ENCODE measurements at regions of chr18 and their contacts with region 1.

Region 1: GRCh38 chr18:23586249-23587196 is at the start of gene NPC1:
- DNase-seq: peak; percentile 95 to 98 (median 98)
- ATAC-seq: peak; percentile 98 to 99
- H3K4me3 ChIP-seq: peak within 1 kb of the TSS; percentile 84
- H3K27ac ChIP-seq: peak within 1 kb of the TSS; percentile 99
- H3K4me1 ChIP-seq: peaks cover 5% of the 10 kb centered on the region
- H3K27me3 ChIP-seq: no peaks in the 10 kb centered on the region
- total RNA-seq, gene NPC1: 13.4 to 22.1 (median 15.7) TPM

Region 2: DNA sequence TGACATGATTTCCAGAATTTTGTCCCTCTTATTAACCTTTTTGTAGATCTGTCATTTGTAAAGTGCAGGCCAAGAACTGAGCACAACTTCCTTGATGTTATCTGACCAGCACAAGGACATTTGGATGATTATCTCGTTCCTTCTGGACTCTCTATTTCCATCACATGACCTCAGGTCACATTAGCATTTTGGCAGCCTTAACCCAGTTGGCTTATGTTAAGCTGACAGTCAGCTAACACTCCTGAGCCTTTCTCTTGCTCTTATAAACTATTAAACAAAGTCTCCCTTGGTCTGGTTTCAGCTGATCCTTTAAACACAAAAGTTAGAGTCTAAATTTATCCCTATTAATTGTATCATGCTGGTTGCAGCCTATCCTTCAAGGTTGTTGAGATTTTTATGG is 820.6 kb before region 1 on chr18:
- intact Hi-C with region 1: no loop called
- DNase-seq: no peak
- ATAC-seq: peak; percentile 74 to 81
- H3K4me3 ChIP-seq: no peak overlapping the region
- H3K27ac ChIP-seq: no peak overlapping the region
- H3K4me1 ChIP-seq: no peaks in the 10 kb centered on the region
- H3K27me3 ChIP-seq: no peaks in the 10 kb centered on the region

Region 3: DNA sequence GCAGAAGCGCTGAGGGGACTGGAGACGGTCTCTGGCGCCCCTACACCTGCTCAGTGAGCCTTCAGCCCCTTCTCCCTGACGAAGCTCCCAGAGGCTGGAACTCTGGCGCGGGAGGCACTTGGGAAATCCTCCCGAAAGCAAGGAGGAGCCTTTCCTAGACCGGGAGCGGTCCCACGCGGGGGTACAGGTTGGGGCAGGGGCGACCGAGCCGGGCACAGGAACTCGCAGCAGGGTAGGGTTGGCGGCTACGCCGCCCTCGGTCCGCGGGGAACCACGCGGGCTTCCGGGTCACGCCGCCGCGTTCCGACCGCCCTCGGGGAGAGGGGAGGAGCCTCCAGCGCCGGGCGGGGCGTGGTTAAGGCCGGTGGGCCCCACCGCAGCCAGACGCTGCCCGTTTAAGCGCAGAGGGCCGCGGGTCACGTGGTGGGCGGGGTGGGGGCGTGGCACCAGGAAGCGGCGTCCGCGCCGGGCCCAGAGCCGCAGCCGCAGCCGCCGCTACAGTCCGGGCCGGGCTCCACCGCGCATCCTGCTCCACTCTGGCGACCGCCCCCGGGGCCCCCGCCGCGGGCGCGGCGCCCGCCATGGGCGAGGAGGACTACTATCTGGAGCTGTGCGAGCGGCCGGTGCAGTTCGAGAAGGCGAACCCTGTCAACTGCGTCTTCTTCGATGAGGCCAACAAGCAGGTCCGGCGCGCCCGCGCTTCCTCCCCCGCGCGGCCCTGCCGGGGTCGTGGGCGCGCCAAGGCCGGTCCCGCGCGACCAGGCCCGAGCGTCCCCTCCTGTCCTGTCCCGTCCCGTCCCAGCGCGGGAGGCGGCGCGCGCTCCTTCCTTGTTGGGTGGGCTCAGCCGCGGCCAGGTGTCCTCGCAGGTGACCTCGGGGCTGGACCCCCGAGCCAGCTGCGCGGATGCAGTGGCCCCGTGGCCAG is 83.2 kb before region 1 on chr18 and contains the start of gene RMC1:
- intact Hi-C with region 1: loop called in 1 of 4 experiments (anchors 5 kb)
- DNase-seq: peak; percentile 98 to 99 (median 99)
- ATAC-seq: peak; percentile 99
- H3K4me3 ChIP-seq: peak within 1 kb of the TSS; percentile 87
- H3K27ac ChIP-seq: peak within 1 kb of the TSS; percentile 54
- H3K4me1 ChIP-seq: peaks cover 3% of the 10 kb centered on the region
- H3K27me3 ChIP-seq: no peaks in the 10 kb centered on the region
- total RNA-seq, gene RMC1: 12.2 to 14.6 (median 13.8) TPM

Region 4: GRCh38 chr18:23515911-23516546 is 70.5 kb before region 1 on chr18:
- intact Hi-C with region 1: loop called (anchors 5 to 10 kb)
- DNase-seq: peak; percentile 66 to 84 (median 84)
- ATAC-seq: peak; percentile 93 to 94
- H3K4me3 ChIP-seq: no peak overlapping the region
- H3K27ac ChIP-seq: no peak overlapping the region
- H3K4me1 ChIP-seq: no peaks in the 10 kb centered on the region
- H3K27me3 ChIP-seq: no peaks in the 10 kb centered on the region

Measured in right cardiac atrium (tissue), 5 donors.